Cardiac septum (tissue), 1 donor: ENCODE measurements at regions of chr12 and their contacts with region 1.

Region 1: DNA sequence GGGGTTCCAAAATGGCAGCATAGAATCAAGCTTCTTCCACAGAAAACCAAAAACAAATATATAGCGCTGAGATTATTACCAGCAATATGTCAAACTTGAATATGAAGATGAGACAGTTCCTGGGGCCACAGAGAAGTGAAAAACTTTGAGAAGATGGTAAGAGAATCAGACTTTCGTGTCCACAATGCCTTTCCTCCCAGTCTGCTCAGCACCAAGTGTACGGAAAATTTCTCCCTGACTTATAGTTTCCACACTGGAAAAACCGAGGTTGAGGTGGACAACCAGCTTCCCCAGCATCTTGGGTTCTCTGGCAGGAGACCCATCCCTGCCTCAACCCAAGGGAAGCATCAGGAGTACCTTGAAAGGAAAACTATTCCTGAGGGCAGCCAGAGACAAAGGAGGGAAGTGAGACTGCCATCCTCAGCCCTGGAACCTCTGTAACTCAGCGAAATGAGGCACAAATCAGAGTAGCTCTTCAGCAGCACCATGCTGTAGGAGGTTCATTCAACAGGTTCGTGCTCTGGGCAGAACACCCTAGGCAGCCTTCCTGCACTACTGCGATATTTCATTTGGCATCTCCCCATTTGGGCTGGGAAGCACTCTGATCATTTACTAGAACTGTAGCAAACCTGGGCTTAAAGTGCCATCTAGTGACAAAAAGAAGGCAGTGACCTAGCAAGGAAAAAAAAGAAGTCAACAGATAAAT is 52.4 kb upstream of the CAPRIN2 start:
- DNase-seq: no peak

Region 2: DNA sequence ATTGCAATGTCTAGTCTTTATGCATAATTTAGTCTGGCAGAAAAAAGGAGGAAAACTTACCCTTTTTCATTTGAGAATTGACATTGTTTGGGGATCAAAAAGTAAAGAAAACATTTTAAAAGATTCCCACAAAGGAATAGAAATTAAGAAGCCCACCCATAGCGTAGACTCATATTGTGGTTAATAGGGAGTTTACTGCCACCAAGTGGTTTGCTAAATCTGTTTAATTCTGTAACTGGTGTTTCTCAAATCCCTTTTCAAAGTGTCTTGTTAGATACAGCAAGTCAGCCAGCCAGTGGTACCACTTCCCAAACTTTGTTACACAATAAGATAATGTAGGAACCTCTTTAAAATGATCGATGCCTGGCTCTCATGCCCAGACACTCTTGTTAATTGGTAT is 291.8 kb before region 1 on chr12:
- intact Hi-C with region 1: loop called (anchors 10 kb)
- DNase-seq: no peak

Region 3: DNA sequence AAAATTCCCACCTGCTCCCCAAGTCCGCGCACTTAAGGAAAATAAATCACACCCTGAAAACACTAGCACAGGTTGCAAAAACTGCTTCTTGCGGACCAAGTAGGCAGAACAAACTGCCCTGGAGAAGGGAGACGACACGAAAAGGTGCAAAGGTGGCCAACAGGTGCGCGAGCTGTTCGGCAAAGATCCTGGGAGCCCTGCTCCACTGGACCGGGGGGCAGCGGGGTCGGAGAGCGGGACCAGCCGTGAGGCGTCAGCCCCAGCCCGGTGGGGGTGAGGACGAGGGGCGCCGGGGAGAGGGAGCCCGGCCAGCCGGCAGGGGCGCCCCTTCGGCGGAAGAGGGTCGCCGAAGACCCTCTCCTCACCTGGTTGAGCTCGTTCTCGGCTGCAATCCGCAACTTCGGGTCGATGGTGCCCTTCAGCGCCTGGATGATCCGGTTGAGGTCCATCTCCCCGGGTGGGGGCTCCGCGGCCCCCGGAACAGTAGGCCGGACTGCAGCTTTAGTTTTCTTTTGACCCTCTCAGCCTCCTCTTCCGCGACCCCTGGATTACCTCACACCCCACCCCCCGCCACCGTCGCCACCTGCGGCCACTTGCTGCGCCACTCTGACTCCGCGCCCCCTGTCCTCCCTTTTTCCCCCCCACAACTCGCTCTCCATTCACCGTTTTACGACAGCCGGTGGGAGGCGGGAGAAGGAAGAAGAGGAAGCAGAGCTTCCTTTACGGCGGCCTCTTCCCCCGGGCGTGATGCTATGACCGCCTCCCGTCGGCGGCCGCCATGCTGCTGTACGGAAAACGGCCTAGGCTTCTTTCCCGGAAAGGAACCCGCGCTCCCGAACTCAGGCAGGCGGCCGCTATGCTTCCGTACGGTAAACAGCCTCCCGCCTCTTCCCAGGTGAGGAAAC is 111.7 kb before region 1 on chr12 and contains the start of gene IPO8:
- intact Hi-C with region 1: loop called (anchors 5 kb)
- DNase-seq: peak; percentile 95
- total RNA-seq, gene IPO8: 24.3 TPM